HCT116 (cell line): ENCODE measurements at regions of chr3 and their contacts with region 1.

Region 1: GRCh38 chr3:13976469-13976868 is 96.6 kb upstream of the WNT7A start:
- DNase-seq: no peak
- ATAC-seq: no peak
- H3K4me3 ChIP-seq: no peak overlapping the region
- H3K27ac ChIP-seq: no peak overlapping the region
- H3K4me1 ChIP-seq: no peaks in the 10 kb centered on the region
- H3K27me3 ChIP-seq: no peaks in the 10 kb centered on the region
- CTCF ChIP-seq: no peak
- POLR2A ChIP-seq: no peak
- RAD21 ChIP-seq: no peak

Region 2: GRCh38 chr3:13822042-13822441 is 154.4 kb before region 1 on chr3:
- CTCF ChIA-PET with region 1: no interaction called
- POLR2A ChIA-PET with region 1: no interaction called
- RAD21 ChIA-PET with region 1: no interaction called
- intact Hi-C with region 1: no loop called
- DNase-seq: peak; percentile 55
- ATAC-seq: peak; percentile 42; the same call in 1 of the 2 replicates
- H3K4me3 ChIP-seq: no peak overlapping the region
- H3K27ac ChIP-seq: no peak overlapping the region
- H3K4me1 ChIP-seq: peaks cover 0 to 33% of the 10 kb centered on the region in 2 experiments; a peak in 1 of 4 replicates
- H3K27me3 ChIP-seq: no peaks in the 10 kb centered on the region
- CTCF ChIP-seq: no peak
- POLR2A ChIP-seq: no peak
- RAD21 ChIP-seq: peak; percentile 12; the same call in 1 of the 2 replicates

Region 3: GRCh38 chr3:14016885-14017475 is 40.5 kb after region 1 on chr3:
- CTCF ChIA-PET with region 1: no interaction called
- POLR2A ChIA-PET with region 1: no interaction called
- RAD21 ChIA-PET with region 1: no interaction called
- intact Hi-C with region 1: loop called (anchors 5 kb)
- DNase-seq: peak; percentile 26
- ATAC-seq: peak; percentile 92
- H3K4me3 ChIP-seq: no peak overlapping the region
- H3K27ac ChIP-seq: no peak overlapping the region
- H3K4me1 ChIP-seq: peaks cover 5 to 12% of the 10 kb centered on the region in 2 experiments; a peak in 3 of 4 replicates
- H3K27me3 ChIP-seq: no peaks in the 10 kb centered on the region
- CTCF ChIP-seq: no peak
- POLR2A ChIP-seq: no peak
- RAD21 ChIP-seq: no peak